CD8-positive, alpha-beta T cell (primary cell): ENCODE measurements at regions of chr20 and their contacts with region 1.

Region 1: DNA sequence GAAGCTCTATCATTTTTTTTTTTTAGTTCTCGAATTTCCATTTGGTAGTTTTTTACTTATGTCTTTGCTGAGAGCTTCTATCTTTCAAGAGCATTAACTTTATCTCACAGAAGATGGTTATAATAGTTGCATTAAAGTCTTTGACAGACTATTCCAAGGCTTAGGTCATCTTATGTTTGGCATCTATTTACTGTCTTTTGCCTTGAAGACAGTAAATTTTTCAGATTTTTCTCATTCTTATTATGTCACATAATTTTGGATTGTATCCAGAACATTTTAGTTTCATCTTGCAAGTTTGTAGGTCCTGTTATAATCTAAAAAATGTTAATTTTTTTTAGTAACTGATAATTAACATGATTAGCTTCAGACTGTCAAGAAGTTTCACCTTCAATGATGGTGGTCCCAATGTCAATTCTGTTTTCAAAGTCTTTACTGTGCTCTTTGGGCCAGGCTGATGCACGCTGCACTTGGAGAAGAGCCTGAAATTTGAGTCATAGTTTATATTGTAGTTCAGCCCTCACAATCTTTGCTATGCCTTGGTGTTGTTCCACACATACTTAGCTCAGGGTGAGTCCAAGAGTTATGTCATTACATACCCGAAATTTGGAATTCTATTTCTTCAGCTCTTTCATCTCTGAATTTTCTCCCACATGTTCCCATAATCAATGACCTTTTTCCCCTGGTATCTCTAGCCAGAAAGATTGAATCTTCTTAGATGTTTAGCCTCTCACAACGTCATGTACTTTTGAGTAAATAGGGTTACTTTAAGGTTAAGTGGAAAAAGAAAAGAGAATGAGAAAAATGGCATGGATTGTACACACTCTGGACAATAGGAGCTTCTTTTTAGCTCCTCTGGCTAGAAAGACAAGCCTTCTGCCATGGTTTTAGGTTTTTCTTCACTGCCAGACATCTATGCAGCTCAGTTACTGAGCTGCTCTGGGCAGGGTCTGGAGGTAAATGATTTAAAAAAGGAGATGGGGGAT is 110.3 kb upstream of the BTBD3 start:
- DNase-seq: no peak
- ATAC-seq: no peak
- H3K4me3 ChIP-seq: no peak overlapping the region
- H3K4me3 Mint-ChIP-seq: no peak overlapping the region
- H3K27ac ChIP-seq: no peak overlapping the region
- H3K27ac Mint-ChIP-seq: no peak overlapping the region
- H3K4me1 ChIP-seq: no peaks in the 10 kb centered on the region
- H3K4me1 Mint-ChIP-seq: no peaks in the 10 kb centered on the region
- H3K27me3 ChIP-seq: no peaks in the 10 kb centered on the region
- H3K27me3 Mint-ChIP-seq: no peaks in the 10 kb centered on the region
- CTCF ChIP-seq: no peak

Region 2: DNA sequence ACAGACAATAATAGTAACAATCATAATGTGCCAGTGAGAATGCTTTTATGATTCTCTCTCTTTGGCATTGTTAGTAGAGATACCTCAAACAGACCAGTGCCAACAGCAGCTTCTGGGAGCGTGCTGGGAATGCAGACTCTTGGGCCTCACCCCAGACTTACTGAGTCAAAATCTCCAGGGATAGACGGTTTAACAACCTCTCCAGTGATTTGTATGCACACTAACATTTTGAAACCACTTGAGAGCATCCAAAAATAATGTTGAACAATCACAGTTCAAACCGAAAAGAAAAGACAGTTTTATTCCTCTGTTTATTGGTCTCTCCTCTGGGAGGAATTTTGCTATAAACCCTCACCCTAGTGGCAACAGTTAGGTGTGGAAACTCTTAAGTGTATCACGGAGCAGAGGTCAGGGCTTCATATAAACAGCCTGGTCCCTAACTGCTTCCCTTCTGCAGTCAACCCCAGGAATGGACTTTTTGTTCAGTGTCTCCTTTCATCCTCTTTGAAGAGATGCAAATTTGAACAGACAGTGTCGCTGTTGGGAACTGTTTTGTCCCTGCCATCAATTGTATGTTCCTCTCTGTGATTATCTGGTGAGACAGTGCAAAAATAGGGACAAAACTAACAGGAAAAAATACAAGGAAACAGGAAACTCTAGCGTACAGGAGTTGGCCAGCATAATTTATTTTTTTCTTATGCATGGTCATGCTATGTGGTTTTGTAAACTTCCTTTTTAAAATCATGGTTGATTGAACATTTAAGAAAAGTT is 52.1 kb before region 1 on chr20:
- CTCF ChIA-PET with region 1: no interaction called
- POLR2A ChIA-PET with region 1: no interaction called
- intact Hi-C with region 1: loop called in 1 of 2 experiments (anchors 5 kb)
- DNase-seq: no peak
- ATAC-seq: no peak
- H3K4me3 ChIP-seq: no peak overlapping the region
- H3K4me3 Mint-ChIP-seq: no peak overlapping the region
- H3K27ac ChIP-seq: no peak overlapping the region
- H3K27ac Mint-ChIP-seq: no peak overlapping the region
- H3K4me1 ChIP-seq: no peaks in the 10 kb centered on the region
- H3K4me1 Mint-ChIP-seq: no peaks in the 10 kb centered on the region
- H3K27me3 ChIP-seq: no peaks in the 10 kb centered on the region
- H3K27me3 Mint-ChIP-seq: no peaks in the 10 kb centered on the region
- CTCF ChIP-seq: no peak

Region 3: DNA sequence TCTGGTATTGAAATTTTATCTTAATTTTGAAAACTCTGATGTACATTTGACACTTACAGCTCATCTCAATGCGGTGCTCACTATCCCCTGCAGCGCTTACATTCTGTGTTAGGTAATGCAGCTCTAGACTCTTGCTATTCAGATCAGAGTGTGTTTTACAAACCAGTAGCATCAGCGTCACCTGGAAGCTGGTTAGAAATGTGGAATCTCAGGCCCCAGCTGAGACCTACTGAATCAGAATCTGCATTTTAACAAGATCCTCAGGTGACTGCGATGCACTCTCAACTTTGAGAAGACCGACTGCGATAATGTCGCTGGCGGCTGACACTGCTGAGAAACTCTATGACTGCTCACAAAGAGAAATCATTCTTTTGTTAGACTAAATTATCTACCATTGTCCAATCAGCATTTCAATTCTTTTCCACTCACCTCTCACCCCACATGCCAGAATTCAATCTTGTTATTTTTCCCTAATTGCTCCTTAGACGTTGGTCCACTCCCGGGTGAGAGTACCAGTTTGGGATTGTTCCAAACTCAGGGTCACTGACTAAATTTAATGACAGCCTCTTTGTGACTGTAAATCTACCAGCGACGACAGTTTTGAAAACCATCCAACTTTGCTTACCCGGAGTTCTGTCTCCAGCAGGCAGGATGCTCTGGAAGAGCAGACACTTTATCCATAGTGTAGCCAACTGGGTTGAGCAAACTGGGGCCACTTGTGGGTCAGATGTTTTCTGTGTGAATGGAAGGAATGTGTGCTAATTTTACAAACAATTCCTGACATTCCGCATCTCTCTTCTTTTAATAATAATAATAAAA is 29.8 kb before region 1 on chr20:
- CTCF ChIA-PET with region 1: no interaction called
- POLR2A ChIA-PET with region 1: no interaction called
- intact Hi-C with region 1: no loop called
- DNase-seq: no peak
- ATAC-seq: no peak
- H3K4me3 ChIP-seq: no peak overlapping the region
- H3K4me3 Mint-ChIP-seq: no peak overlapping the region
- H3K27ac ChIP-seq: no peak overlapping the region
- H3K27ac Mint-ChIP-seq: no peak overlapping the region
- H3K4me1 ChIP-seq: no peaks in the 10 kb centered on the region
- H3K4me1 Mint-ChIP-seq: no peaks in the 10 kb centered on the region
- H3K27me3 ChIP-seq: no peaks in the 10 kb centered on the region
- H3K27me3 Mint-ChIP-seq: no peaks in the 10 kb centered on the region
- CTCF ChIP-seq: no peak

Region 4: GRCh38 chr20:11844691-11845090 is 37.3 kb after region 1 on chr20:
- CTCF ChIA-PET with region 1: no interaction called
- POLR2A ChIA-PET with region 1: no interaction called
- intact Hi-C with region 1: no loop called
- DNase-seq: no peak
- ATAC-seq: no peak
- H3K4me3 ChIP-seq: no peak overlapping the region
- H3K4me3 Mint-ChIP-seq: no peak overlapping the region
- H3K27ac ChIP-seq: no peak overlapping the region
- H3K27ac Mint-ChIP-seq: no peak overlapping the region
- H3K4me1 ChIP-seq: no peaks in the 10 kb centered on the region
- H3K4me1 Mint-ChIP-seq: no peaks in the 10 kb centered on the region
- H3K27me3 ChIP-seq: no peaks in the 10 kb centered on the region
- H3K27me3 Mint-ChIP-seq: no peaks in the 10 kb centered on the region
- CTCF ChIP-seq: no peak